Breast epithelium (tissue), 4 donors: ENCODE measurements at regions of chr2 and their contacts with region 1.

Region 1: DNA sequence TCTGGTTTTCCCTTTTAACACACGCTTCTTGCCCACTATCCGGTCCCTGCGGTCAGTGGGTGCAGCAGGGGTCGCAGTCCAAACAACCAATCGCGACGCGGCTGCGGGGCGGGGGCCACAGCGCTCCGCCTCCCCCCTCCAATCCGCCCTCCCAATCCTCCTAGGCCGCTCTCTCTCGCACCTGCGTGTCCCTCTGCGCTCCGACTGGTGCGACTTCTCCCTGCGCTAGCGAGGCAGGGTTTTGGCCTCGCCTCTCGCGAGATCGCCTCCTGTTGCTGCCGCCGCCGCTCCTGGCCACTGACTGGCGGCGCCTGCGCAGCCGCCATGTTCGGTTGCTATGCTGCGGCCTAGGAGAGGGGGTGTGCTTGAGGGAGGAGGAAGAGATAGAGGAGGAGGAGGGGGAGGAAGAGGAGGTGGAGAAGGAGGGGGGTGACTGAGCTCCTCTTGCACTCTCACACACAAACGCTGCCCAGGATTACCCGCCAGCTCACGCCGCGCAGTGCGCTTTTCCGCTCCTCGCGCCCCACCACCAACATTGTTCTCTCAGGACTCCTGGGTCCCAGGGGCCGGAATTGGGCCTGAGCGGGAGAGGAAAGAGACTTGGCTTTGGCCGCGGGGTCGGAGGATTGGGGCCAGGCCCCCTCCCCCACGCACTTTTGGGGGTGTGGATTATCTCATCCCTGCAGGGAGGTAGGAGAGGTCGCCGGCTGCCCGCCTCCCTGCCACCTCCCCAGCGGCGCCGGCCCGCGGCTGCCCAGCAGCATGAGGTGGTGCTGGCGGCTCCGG is at the start of gene PTPN4:
- DNase-seq: peak; percentile 93 to 95
- H3K4me3 ChIP-seq: peak within 1 kb of the TSS; percentile 67 to 96 (median 84)
- H3K27ac ChIP-seq: peak within 1 kb of the TSS; percentile 93 to 94
- H3K4me1 ChIP-seq: no peaks in the 10 kb centered on the region
- H3K27me3 ChIP-seq: no peaks in the 10 kb centered on the region
- CTCF ChIP-seq: no peak
- POLR2A ChIP-seq: peak; percentile 84
- total RNA-seq, gene PTPN4: 29.1 to 49.6 (median 38.7) TPM

Region 2: DNA sequence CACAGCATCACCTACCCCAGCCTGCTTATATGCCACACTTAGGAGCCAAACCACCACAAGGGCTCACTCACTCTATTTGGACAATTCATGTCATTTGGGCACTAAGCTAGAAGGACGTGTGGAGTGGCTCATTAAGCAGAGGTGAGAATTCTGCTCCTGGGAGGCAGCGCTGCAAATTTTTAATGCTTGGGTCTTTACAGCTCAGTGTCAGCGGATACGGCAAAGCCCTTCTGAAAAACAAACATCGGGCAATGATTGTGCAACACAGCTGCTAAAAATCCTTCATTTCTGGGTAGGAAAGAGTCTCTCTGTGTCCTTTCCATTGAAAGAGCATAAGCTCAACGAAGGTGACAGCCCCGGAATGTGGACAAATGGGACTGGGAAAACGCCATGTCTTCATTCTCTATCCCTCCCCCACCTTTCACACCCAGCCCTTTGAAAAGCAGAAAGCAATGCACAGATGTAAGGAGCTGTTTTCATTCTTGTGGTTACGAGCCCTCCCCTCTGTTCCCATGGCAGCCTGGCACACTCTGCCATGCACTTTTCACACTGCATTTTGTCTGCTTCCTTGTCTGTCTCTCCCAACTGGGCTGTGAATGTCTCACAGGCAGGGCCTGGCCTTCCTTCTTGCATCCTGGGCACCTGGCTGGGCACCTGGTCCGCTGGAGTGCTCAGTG is 64.7 kb before region 1 on chr2:
- intact Hi-C with region 1: loop called (anchors 2 kb)
- DNase-seq: no peak
- H3K4me3 ChIP-seq: peak overlapping the region in 1 of 3 donors; percentile 28
- H3K27ac ChIP-seq: peak overlapping the region; percentile 30 to 69
- H3K4me1 ChIP-seq: peaks cover 4 to 16% of the 10 kb centered on the region in 2 donors
- H3K27me3 ChIP-seq: no peaks in the 10 kb centered on the region
- CTCF ChIP-seq: no peak
- POLR2A ChIP-seq: no peak

Region 3: DNA sequence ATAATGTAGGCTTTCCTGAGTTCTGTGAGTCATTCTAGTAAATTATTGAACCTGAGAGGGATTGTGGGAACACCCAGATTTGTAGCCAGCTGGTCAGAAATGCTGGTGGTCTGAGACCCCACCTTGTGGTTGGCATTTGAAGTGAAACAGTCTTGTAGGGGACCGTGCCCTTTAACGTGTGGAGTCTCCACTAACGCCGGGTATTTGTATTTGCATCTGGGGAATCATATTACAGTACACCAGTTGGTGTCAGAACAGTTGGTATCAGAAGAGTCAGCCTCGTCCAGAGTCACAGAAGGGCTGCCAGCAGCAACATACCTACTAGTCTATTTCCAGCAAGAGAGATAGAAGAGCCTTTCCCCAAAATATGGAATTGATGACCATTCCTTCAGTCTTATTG is 38.2 kb before region 1 on chr2:
- intact Hi-C with region 1: no loop called
- DNase-seq: no peak
- H3K4me3 ChIP-seq: no peak overlapping the region
- H3K27ac ChIP-seq: no peak overlapping the region
- H3K4me1 ChIP-seq: no peaks in the 10 kb centered on the region
- H3K27me3 ChIP-seq: no peaks in the 10 kb centered on the region
- CTCF ChIP-seq: no peak
- POLR2A ChIP-seq: no peak

Region 4: GRCh38 chr2:119826370-119826961 is 66.8 kb after region 1 on chr2:
- intact Hi-C with region 1: loop called (anchors 10 kb)
- DNase-seq: no peak
- H3K4me3 ChIP-seq: no peak overlapping the region
- H3K27ac ChIP-seq: no peak overlapping the region
- H3K4me1 ChIP-seq: no peaks in the 10 kb centered on the region
- H3K27me3 ChIP-seq: no peaks in the 10 kb centered on the region
- CTCF ChIP-seq: peak in 1 of 3 donors; percentile 11
- POLR2A ChIP-seq: no peak